HEK293 (cell line): ENCODE measurements at regions of chr10 and their contacts with region 1.

Region 1: DNA sequence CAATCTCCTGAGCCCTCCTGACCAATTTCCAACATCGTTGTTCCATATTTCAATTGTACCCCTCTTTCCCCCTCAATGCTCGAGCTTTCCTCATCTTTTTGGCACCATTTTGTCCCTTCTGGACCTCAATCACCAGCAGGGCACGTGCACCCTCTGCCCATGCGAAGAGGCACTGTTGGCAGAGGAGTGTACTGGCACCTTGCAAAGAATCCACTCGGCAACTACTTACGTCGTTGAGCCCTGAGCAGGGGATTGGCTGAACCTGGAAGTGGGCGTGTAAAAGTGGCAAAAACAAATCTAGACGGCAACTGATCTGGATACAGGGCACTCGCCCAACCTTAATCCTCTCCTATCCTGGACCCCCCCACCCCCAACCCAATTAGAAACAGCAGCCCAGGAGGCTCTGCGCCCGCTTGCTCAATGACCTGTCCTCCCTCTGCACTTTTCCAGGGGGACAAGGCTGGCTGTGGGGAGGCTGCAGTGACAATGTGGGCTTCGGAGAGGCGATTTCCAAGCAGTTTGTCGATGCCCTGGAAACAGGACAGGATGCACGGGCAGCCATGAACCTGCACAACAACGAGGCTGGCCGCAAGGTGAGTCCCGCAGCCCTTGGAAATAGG is 18.8 kb downstream of the WNT8B start:
- H3K4me3 ChIP-seq: peak overlapping the region; percentile 40
- H3K27ac ChIP-seq: no peak overlapping the region; the same call in 1 of the 2 replicates
- H3K4me1 ChIP-seq: peaks cover 8% of the 10 kb centered on the region
- CTCF ChIP-seq: peak; percentile 29; the same call in 1 of the 2 replicates

Region 2: DNA sequence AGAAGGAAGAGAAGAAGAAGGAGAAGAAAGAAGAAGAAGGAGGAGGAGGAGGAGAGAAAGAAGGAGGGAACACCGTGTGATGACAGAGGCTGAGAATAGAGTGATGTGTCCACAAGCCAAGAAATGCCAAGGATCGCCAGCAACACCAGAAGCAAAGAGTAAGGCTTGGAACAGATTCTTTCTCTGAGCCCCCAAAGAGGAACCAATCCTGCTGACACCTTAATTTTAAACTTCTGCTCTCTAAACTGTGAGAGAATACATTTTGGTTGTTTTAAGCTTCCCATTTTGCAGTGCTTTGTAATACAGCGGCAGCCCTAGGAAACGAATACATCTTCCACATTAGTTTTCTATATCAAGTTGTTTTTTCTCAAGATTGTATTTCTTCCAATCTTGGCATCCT is 32.6 kb before region 1 on chr10:
- CTCF ChIA-PET with region 1: interaction called, 11 read pairs
- POLR2A ChIA-PET with region 1: no interaction called
- H3K4me3 ChIP-seq: no peak overlapping the region
- H3K27ac ChIP-seq: no peak overlapping the region
- H3K4me1 ChIP-seq: no peaks in the 10 kb centered on the region
- CTCF ChIP-seq: no peak

Region 3: DNA sequence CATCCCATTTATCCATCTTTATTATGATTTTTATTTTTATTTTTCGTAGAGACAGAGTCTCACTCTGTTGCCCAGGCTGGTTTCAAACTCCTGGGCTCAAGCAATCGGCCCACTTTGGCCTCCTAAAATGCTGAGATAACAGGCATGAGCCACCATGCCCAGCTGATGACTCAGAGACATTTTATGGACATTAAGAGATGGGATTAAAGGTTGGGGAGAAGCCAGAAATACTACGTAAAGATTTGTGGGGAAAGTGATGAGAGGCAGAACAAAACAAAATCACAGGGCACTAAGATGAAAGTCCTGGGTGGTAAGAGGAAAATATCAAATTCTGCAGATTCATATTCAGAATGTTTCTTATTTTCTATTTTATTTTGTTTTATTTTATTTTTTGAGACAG is 11.2 kb before region 1 on chr10:
- CTCF ChIA-PET with region 1: interaction called, 40 read pairs
- POLR2A ChIA-PET with region 1: no interaction called
- H3K4me3 ChIP-seq: no peak overlapping the region
- H3K27ac ChIP-seq: no peak overlapping the region
- H3K4me1 ChIP-seq: no peaks in the 10 kb centered on the region
- CTCF ChIP-seq: no peak

Region 4: DNA sequence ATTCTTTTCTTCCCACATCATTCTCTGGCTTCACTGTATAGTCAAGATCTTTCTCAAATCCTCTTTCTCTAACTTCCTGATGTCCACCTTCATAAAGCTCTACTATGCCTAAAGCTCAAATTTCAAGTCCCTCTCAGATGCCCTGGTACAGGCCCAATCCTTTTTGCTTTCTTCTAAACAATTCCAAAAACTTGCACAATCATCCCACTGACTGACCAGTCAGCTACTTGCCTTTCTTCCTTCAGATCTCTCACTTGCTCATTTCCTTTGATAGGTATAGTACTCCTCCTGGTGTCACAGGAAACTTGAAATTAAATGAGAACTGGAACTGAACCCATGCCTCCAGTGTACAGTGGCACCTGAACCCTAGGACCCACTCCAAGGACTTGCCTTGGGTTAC is 19.9 kb after region 1 on chr10:
- CTCF ChIA-PET with region 1: interaction called, 19 read pairs
- POLR2A ChIA-PET with region 1: no interaction called
- H3K4me3 ChIP-seq: no peak overlapping the region
- H3K27ac ChIP-seq: no peak overlapping the region
- H3K4me1 ChIP-seq: no peaks in the 10 kb centered on the region
- CTCF ChIP-seq: no peak

Region 5: DNA sequence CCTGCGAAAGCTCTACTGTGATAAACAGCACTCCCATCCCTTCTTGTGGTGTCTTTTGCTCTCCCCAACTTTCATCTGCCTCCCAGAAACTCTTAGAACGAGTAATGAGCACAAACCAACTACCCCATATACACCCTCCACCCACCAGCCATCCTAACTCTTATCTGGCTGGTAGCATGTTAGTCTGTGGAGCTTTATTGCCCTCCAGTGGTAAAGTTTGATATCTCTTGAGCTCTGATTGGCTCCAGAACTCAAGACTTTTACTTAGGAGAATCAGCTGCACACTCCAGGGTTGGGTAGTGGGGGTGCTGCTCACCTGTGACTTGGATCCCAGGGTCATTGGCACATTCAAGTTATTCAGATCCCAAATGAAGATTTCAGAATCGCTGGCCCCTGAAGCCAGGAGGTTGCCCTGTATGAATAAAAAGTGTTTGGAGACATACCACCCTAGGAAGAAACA is 27.1 kb after region 1 on chr10:
- CTCF ChIA-PET with region 1: interaction called, 25 read pairs
- POLR2A ChIA-PET with region 1: no interaction called
- H3K4me3 ChIP-seq: no peak overlapping the region
- H3K27ac ChIP-seq: no peak overlapping the region
- H3K4me1 ChIP-seq: no peaks in the 10 kb centered on the region
- CTCF ChIP-seq: peak; percentile 69

Region 6: GRCh38 chr10:102476466-102477141 is 1995.0 kb after region 1 on chr10:
- CTCF ChIA-PET with region 1: no interaction called
- POLR2A ChIA-PET with region 1: no interaction called
- H3K4me3 ChIP-seq: no peak overlapping the region
- H3K27ac ChIP-seq: no peak overlapping the region
- H3K4me1 ChIP-seq: no peaks in the 10 kb centered on the region
- CTCF ChIP-seq: no peak